ENCODE measurements at regions of chr17 and their contacts with region 1.

Region 1: DNA sequence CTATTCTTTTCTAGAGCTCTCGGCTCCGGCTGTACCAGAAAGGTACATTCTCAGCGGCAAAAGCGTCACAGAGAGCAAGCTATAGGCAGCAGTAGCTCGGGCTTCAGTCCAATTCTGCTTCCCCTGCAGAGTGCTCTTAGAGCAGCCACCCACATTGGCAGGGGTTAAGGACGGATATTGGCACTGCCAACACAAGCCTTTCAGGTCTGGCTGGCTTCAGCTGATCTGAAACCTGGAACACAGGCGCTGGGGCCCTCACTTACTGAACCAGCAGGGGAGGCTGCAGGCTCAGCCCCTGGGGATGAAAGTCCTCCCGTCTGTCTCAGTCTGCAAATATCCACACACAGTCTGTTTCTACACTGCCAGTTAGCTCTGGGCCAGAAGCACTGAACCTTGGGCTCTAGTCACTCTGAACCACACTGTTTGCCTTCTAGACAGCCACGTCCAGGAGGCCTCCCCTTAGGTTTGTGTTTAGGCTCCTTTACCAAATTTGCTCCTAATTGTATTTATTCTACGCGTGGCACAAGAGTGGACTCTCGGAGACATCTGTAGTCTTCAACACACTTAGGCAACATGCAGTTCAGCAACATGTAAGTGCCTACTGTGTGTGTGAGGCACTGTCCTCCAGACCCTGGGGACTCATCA is 40.1 kb downstream of the HIC1 start:
- DNase-seq: peak; percentile 87

Region 2: DNA sequence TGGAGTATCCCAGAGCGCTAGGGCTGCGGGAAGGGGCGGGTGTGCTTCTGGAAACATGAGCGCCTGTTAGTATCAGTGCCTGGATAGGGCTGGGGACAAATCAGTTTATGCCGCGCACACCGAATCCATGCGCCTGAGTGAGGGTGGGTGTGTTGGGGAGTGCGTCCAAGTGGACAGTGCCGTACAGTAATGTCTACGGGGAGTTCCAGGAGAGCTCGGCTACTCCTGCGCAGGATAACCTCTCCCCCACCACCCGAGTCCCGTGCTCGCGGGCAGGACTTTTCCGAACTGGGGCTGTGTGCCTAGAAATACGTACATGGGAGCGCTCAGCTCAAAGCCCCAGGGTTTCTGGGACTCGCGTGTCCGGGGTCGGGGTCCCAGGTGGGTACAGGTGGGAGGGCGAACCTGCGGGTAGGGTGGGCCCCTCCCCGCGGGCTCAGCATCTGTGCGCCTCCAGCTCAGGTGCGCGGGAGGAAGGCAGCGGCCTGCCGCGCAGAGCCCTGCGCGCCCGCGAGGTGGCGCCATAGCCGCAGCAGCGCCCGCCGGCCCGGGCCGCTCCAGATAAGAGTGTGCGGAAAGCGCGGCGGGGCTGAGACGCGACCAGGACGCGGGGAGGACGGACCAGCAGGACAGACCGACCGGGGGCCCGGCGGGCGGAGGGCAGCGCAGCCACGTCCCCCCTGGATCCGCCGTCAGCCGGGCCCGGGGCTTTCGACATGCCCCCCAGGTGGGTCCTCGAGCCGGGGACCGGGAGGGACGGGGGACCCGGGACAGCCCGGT is 40.3 kb before region 1 on chr17 and contains the start of gene HIC1:
- intact Hi-C with region 1: loop called in 1 of 2 experiments (anchors 5 kb)
- DNase-seq: peak; percentile 95
- total RNA-seq, gene HIC1: 41.3 to 64.2 TPM

Region 3: GRCh38 chr17:2122641-2123302 is 27.8 kb after region 1 on chr17:
- intact Hi-C with region 1: loop called in 1 of 2 experiments (anchors 1 kb)
- DNase-seq: peak; percentile 89

Region 4: DNA sequence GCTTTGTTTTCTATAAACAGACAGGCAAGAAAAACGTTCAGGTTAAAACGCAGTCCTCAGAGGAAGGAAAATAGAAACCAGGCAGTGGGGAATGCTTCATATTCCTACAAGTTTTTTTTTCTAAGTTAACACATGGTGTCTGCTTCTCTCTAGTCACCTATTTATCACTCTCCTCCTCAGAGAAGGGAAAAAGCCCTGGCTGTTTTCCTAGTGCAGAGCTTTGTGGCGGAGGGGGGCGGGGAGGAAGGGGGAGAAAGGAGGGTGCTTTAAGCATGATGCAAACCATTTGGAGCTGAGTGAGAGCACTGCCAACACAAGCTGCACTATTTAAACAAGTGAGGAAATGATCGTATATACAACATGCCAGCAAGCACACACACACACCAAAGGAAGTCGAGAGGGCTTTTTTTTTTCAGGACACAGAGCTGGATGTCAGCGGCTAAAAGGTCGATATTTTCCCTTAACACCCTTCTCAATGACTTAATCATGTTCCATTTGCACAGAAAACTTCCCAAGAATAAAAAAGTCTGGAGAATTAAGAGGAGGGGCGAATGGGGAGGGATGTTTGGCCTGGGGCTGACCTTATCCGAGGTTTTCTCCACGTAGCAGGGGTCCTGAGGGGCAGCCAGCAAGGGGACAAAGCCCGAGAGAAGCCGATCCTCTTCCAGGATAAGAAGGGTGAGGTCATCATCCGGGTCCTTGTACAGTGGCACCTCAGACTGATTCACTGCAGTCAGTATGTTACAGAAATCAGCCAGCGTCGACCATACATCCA is 77.3 kb after region 1 on chr17:
- intact Hi-C with region 1: loop called in 1 of 2 experiments (anchors 10 kb)
- DNase-seq: peak; percentile 89

Region 5: GRCh38 chr17:2244545-2245525 is 149.8 kb after region 1 on chr17:
- intact Hi-C with region 1: loop called (anchors 10 kb)
- DNase-seq: peak; percentile 96

Region 6: DNA sequence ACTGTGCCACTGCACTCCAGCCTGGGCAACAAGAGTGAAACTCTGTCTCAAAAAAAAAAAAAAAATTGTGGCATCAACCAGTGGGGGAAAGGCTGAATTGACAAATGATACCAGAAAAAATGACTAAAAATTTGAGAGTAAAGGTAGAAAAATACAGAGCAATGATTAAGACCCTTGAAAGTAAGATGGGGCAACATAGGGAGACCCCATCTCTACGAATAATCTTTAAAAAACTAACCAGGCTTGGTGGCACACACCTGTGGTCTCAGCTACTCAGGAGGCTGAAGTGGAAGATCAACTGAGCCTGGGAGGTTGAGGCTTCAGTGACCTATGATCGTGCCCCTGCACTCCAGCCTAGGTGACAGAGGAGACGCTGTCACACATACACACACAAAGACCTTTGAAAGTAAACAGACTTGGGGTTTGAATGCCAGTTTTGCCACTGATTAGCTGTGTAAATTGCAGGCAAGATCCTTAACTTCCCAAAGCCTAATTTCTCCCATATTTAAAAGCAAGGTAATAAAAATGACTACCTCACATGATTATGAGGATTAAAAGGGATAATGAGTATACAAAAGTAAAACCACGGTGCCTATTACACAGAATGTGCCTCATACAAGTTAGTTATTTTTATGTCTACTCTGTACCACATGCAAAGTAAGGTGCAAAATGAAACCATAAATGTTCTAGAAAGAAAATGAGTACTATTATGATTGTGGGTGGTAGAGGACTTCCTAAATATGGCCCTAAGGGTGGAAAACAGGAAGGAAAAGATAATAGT is 476.7 kb after region 1 on chr17:
- intact Hi-C with region 1: no loop called
- DNase-seq: peak; percentile 6